ENCODE measurements at regions of chr19 and their contacts with region 1.

Region 1: GRCh38 chr19:45405435-45406225 is 761 bp upstream of the PPP1R13L start:
- DNase-seq: peak; percentile 89
- ATAC-seq: peak; percentile 64
- H3K4me3 ChIP-seq: peak overlapping the region; percentile 97
- H3K27ac ChIP-seq: peak overlapping the region; percentile 92
- H3K4me1 ChIP-seq: peaks cover 24% of the 10 kb centered on the region; the same call in 1 of the 2 replicates
- H3K27me3 ChIP-seq: no peaks in the 10 kb centered on the region
- CTCF ChIP-seq: no peak

Region 2: DNA sequence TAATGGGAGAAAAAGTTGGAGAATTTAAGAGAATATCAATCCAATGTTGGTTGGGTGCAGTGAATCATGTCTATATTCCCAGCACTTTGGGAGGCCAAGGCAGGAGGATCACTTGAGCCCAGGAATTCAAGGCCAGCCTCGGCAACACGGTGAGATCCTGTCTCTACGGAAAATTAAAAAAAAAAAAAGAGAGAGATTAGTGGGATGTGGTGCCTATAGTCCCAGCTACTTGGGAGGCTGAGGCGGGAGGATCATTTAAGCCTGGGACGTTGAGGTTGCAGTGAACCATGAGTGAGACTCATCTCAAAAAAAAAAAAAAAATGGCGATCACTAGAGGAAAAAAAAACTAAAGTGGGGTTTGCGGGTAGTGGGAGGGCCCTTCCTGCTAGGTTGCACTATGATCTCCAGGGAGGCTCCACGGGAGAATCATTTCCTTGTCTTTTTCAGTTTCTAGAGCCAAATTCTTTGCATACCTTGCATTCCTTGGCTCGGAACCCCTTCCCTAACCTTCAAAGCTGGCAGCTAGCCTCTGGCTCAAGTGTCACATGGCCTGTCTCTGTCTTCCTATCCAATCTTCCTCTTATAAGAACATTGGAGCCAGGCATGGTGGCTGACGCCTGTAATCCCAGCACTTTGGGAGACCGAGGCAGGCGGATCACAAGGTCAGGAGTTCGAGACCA is 29.4 kb before region 1 on chr19:
- CTCF ChIA-PET with region 1: no interaction called
- POLR2A ChIA-PET with region 1: interaction called, 3 read pairs
- intact Hi-C with region 1: loop called (anchors 2 kb)
- DNase-seq: peak; percentile 94
- ATAC-seq: peak; percentile 80
- H3K4me3 ChIP-seq: no peak overlapping the region
- H3K27ac ChIP-seq: peak overlapping the region; percentile 84
- H3K4me1 ChIP-seq: peaks cover 19% of the 10 kb centered on the region
- H3K27me3 ChIP-seq: no peaks in the 10 kb centered on the region
- CTCF ChIP-seq: no peak

Region 3: GRCh38 chr19:45423589-45424190 is 18.1 kb after region 1 on chr19 and contains the start of gene ERCC1:
- CTCF ChIA-PET with region 1: no interaction called
- POLR2A ChIA-PET with region 1: no interaction called
- intact Hi-C with region 1: loop called (anchors 1 kb)
- DNase-seq: peak; percentile 93
- ATAC-seq: peak; percentile 78
- H3K4me3 ChIP-seq: peak within 1 kb of the TSS; percentile 69
- H3K27ac ChIP-seq: peak within 1 kb of the TSS; percentile 97
- H3K4me1 ChIP-seq: peaks cover 25% of the 10 kb centered on the region
- H3K27me3 ChIP-seq: no peaks in the 10 kb centered on the region
- CTCF ChIP-seq: no peak
- total RNA-seq, gene ERCC1: 56.2 and 57.3 TPM in 2 replicates

Region 4: GRCh38 chr19:45478454-45479238 is 73.0 kb after region 1 on chr19:
- CTCF ChIA-PET with region 1: interaction called, 3 read pairs
- POLR2A ChIA-PET with region 1: no interaction called
- intact Hi-C with region 1: loop called (anchors 2 kb)
- DNase-seq: peak; percentile 90
- ATAC-seq: peak; percentile 88
- H3K4me3 ChIP-seq: peak overlapping the region; percentile 68
- H3K27ac ChIP-seq: peak overlapping the region; percentile 93
- H3K4me1 ChIP-seq: no peaks in the 10 kb centered on the region
- H3K27me3 ChIP-seq: no peaks in the 10 kb centered on the region
- CTCF ChIP-seq: peak; percentile 84